ENCODE measurements at regions of chr10 and their contacts with region 1.

Region 1: DNA sequence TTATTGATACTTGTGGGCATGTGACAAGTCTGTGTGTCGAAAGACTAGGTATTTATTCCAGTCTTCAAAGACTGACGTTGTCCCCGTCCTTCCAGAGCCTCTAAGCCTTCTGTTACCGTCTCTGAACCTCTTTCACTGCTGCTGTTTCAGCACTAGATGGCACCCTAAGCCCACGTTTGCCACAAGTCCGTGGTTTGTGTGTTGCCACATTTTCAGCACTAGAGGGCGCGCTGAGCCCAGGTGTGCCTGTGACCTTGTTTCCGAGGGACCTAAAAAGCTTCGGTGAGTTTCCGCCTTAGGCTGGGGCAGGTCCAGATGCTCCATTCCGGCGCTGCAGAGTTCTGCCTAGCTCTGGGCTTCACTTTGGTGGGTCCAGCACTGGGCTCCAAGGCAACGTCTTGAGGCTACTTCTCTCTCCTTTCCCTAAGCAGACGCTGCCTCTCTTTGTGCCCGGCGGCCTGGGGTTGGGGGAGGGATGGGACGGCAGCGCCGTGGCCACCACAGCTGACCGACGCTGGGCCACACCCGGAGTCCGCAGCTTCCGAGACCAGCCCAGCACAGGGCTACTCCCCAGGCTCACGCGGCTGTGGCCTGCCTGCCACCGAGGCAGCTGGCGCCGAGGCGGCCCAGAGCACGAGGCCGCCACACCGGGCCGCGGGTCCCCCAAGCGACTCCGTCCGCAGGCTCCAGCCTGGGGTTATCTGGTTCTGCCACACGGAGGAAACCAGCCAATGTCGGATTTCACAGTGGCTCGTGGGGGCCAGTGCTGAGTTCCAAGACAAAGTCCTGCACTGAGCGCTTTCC is 520.2 kb downstream of the REEP3 start:
- DNase-seq: peak; percentile 51
- ATAC-seq: peak; percentile 94
- H3K4me3 ChIP-seq: peak overlapping the region; percentile 17; the same call in 1 of the 2 replicates
- H3K27ac ChIP-seq: no peak overlapping the region
- H3K4me1 ChIP-seq: peaks cover 5% of the 10 kb centered on the region
- H3K27me3 ChIP-seq: no peaks in the 10 kb centered on the region; a peak in 1 of 4 replicates
- CTCF ChIP-seq: peak; percentile 99 to 100 (median 100); a peak in 5 of 6 replicates
- EP300 ChIP-seq: no peak
- POLR2A ChIP-seq: no peak
- RAD21 ChIP-seq: peak; percentile 100

Region 2: DNA sequence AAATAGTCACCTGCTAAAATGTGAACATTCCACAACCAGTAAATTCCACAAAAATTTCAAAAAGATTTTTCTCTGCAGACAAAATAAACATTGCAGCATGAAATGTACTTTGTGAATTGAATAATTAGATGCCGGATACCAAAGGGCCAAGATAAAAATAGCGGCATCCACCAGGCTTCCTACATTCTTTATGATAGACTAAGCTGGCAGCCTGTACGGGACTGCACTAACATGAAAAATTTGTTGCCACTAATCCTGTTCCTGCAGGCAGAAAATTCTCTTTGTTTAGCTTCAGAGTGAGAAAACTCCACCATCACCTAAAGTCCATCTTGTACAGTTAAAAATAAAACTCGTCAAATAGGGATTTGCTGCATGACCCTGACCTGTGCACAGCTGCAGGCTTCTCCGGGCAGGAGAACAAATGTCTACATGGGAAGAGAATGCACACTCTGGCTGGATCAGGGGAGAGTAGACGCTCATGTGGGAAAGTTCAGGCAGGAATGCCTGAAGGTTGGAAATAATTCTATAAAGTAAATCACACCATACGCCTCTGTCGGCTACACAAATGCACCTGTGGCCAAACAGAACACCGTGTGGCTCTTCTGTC is 1252.4 kb before region 1 on chr10:
- CTCF ChIA-PET with region 1: no interaction called
- POLR2A ChIA-PET with region 1: no interaction called
- RAD21 ChIA-PET with region 1: no interaction called
- SMC1A ChIA-PET with region 1: no interaction called
- in situ Hi-C with region 1: no loop called
- intact Hi-C with region 1: no loop called
- DNase-seq: no peak
- ATAC-seq: no peak
- H3K4me3 ChIP-seq: no peak overlapping the region
- H3K27ac ChIP-seq: no peak overlapping the region
- H3K4me1 ChIP-seq: no peaks in the 10 kb centered on the region
- H3K27me3 ChIP-seq: no peaks in the 10 kb centered on the region
- CTCF ChIP-seq: no peak
- EP300 ChIP-seq: no peak
- POLR2A ChIP-seq: no peak
- RAD21 ChIP-seq: no peak

Region 3: GRCh38 chr10:63866075-63866746 is 175.2 kb before region 1 on chr10:
- CTCF ChIA-PET with region 1: interaction called, 4 read pairs
- POLR2A ChIA-PET with region 1: no interaction called
- RAD21 ChIA-PET with region 1: interaction called, 3 read pairs
- SMC1A ChIA-PET with region 1: no interaction called
- in situ Hi-C with region 1: no loop called
- intact Hi-C with region 1: loop called (anchors 5 kb)
- DNase-seq: peak; percentile 5
- ATAC-seq: peak; percentile 95
- H3K4me3 ChIP-seq: no peak overlapping the region
- H3K27ac ChIP-seq: no peak overlapping the region
- H3K4me1 ChIP-seq: no peaks in the 10 kb centered on the region
- H3K27me3 ChIP-seq: no peaks in the 10 kb centered on the region
- CTCF ChIP-seq: peak; percentile 80 to 88 (median 82)
- EP300 ChIP-seq: no peak
- POLR2A ChIP-seq: no peak
- RAD21 ChIP-seq: peak; percentile 61

Region 4: DNA sequence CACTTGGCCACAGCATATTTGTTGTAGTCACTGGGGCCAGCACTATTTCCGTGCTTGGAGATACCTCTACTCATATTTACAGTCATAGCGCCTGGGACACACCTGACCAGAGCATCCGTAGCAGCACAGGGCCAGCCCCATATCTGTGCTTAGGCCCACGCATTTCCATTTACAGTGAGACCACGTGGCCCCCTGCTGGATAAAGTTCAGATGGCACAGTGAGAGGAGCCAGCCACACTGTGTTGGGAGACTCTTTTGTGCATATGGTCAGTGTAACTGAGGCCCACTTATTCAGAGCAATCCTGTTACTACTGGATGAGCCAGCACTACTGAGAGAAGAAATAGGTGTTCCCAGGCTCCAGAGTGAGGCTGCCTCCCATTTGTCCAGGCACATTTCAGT is 64.8 kb before region 1 on chr10:
- CTCF ChIA-PET with region 1: interaction called, 13 read pairs
- POLR2A ChIA-PET with region 1: no interaction called
- RAD21 ChIA-PET with region 1: interaction called, 8 read pairs
- SMC1A ChIA-PET with region 1: interaction called, 7 read pairs
- in situ Hi-C with region 1: no loop called
- intact Hi-C with region 1: no loop called
- DNase-seq: no peak
- ATAC-seq: peak; percentile 99
- H3K4me3 ChIP-seq: no peak overlapping the region
- H3K27ac ChIP-seq: no peak overlapping the region
- H3K4me1 ChIP-seq: no peaks in the 10 kb centered on the region; the same call in 1 of the 2 replicates
- H3K27me3 ChIP-seq: no peaks in the 10 kb centered on the region
- CTCF ChIP-seq: peak; percentile 57 to 77 (median 76)
- EP300 ChIP-seq: no peak
- POLR2A ChIP-seq: no peak
- RAD21 ChIP-seq: peak; percentile 63

Region 5: GRCh38 chr10:64115913-64116643 is 74.7 kb after region 1 on chr10:
- CTCF ChIA-PET with region 1: interaction called, 3 read pairs
- POLR2A ChIA-PET with region 1: no interaction called
- RAD21 ChIA-PET with region 1: no interaction called
- SMC1A ChIA-PET with region 1: interaction called, 3 read pairs
- in situ Hi-C with region 1: no loop called
- intact Hi-C with region 1: loop called (anchors 5 kb)
- DNase-seq: no peak
- ATAC-seq: peak; percentile 72
- H3K4me3 ChIP-seq: no peak overlapping the region
- H3K27ac ChIP-seq: no peak overlapping the region
- H3K4me1 ChIP-seq: no peaks in the 10 kb centered on the region
- H3K27me3 ChIP-seq: no peaks in the 10 kb centered on the region; a peak in 1 of 4 replicates
- CTCF ChIP-seq: peak; percentile 45 to 49 (median 48); a peak in 4 of 6 replicates
- EP300 ChIP-seq: no peak
- POLR2A ChIP-seq: no peak
- RAD21 ChIP-seq: peak; percentile 54

Region 6: DNA sequence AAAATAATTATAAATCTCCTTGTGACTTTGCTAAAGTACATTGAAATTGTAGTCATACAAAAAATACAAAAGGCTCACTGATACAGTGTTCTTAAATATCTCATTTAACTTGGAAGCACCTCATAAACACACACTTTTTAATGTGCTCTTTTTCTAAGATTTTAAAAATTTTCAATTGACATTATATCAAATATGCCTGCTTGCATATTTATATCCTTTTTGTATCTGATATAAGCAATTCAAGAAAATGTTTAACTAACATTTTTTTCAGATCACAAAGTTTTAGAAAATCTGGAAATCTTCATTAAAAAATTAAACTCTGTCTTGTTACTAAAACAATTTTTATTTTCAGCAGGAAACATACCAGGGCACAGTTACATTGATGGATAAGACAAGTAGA is 141.3 kb after region 1 on chr10:
- CTCF ChIA-PET with region 1: no interaction called
- POLR2A ChIA-PET with region 1: no interaction called
- RAD21 ChIA-PET with region 1: no interaction called
- SMC1A ChIA-PET with region 1: no interaction called
- in situ Hi-C with region 1: no loop called
- intact Hi-C with region 1: no loop called
- DNase-seq: no peak
- ATAC-seq: no peak
- H3K4me3 ChIP-seq: no peak overlapping the region
- H3K27ac ChIP-seq: no peak overlapping the region
- H3K4me1 ChIP-seq: no peaks in the 10 kb centered on the region
- H3K27me3 ChIP-seq: no peaks in the 10 kb centered on the region
- CTCF ChIP-seq: no peak
- EP300 ChIP-seq: no peak
- POLR2A ChIP-seq: no peak
- RAD21 ChIP-seq: no peak

Region 7: GRCh38 chr10:64286533-64286932 is 245.1 kb after region 1 on chr10:
- CTCF ChIA-PET with region 1: interaction called, 10 read pairs
- POLR2A ChIA-PET with region 1: no interaction called
- RAD21 ChIA-PET with region 1: interaction called, 3 read pairs
- SMC1A ChIA-PET with region 1: interaction called, 3 read pairs
- in situ Hi-C with region 1: no loop called
- intact Hi-C with region 1: no loop called
- DNase-seq: no peak
- ATAC-seq: no peak
- H3K4me3 ChIP-seq: no peak overlapping the region
- H3K27ac ChIP-seq: no peak overlapping the region
- H3K4me1 ChIP-seq: no peaks in the 10 kb centered on the region
- H3K27me3 ChIP-seq: no peaks in the 10 kb centered on the region; a peak in 1 of 4 replicates
- CTCF ChIP-seq: no peak
- EP300 ChIP-seq: no peak
- POLR2A ChIP-seq: no peak
- RAD21 ChIP-seq: no peak

Region 8: DNA sequence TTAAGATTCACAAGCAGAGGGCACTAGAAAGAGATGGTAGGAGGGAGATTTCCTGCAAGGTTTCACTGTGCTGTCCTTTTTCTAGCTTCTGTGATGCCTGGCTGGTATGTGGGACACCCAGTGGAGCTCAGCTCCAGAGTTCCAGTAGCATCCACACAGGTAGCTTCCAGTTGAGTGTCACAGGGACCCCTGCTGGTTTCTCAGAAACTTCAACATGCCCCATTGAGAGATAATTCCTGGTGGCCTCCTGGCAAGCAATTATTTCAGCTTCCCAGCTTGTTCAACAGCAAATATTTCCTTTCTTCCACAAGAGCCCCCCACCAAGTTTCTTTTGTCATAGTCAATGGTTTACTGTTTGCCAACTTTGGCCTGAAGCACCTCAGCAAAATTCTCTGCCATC is 338.5 kb after region 1 on chr10:
- CTCF ChIA-PET with region 1: interaction called, 7 read pairs
- POLR2A ChIA-PET with region 1: no interaction called
- RAD21 ChIA-PET with region 1: no interaction called
- SMC1A ChIA-PET with region 1: no interaction called
- in situ Hi-C with region 1: no loop called
- intact Hi-C with region 1: loop called (anchors 1 kb)
- DNase-seq: no peak
- ATAC-seq: peak; percentile 50; the same call in 2 of the 3 replicates
- H3K4me3 ChIP-seq: no peak overlapping the region
- H3K27ac ChIP-seq: no peak overlapping the region
- H3K4me1 ChIP-seq: no peaks in the 10 kb centered on the region
- H3K27me3 ChIP-seq: no peaks in the 10 kb centered on the region
- CTCF ChIP-seq: peak; percentile 8 to 15 (median 9); a peak in 2 of 6 replicates
- EP300 ChIP-seq: no peak
- POLR2A ChIP-seq: no peak
- RAD21 ChIP-seq: no peak; the same call in 1 of the 2 replicates

Region 9: GRCh38 chr10:64733980-64734379 is 692.6 kb after region 1 on chr10:
- CTCF ChIA-PET with region 1: no interaction called
- POLR2A ChIA-PET with region 1: no interaction called
- RAD21 ChIA-PET with region 1: no interaction called
- SMC1A ChIA-PET with region 1: no interaction called
- in situ Hi-C with region 1: no loop called
- intact Hi-C with region 1: loop called (anchors 5 kb)
- DNase-seq: no peak
- ATAC-seq: peak; percentile 79
- H3K4me3 ChIP-seq: no peak overlapping the region
- H3K27ac ChIP-seq: no peak overlapping the region
- H3K4me1 ChIP-seq: no peaks in the 10 kb centered on the region
- H3K27me3 ChIP-seq: no peaks in the 10 kb centered on the region
- CTCF ChIP-seq: peak; percentile 17 to 47 (median 23); a peak in 3 of 6 replicates
- EP300 ChIP-seq: no peak
- POLR2A ChIP-seq: no peak
- RAD21 ChIP-seq: peak; percentile 59

Measured in GM12878 (cell line).